Left ventricle myocardium superior (tissue), 1 donor: ENCODE measurements at regions of chr7 and their contacts with region 1.

Region 1: GRCh38 chr7:130010689-130011412 is 40.3 kb downstream of the ZC3HC1 start:
- DNase-seq: peak; percentile 77
- ATAC-seq: peak; percentile 68

Region 2: GRCh38 chr7:129664029-129665012 is 346.5 kb before region 1 on chr7:
- intact Hi-C with region 1: loop called (anchors 10 kb)
- DNase-seq: no peak
- ATAC-seq: peak; percentile 25

Region 3: DNA sequence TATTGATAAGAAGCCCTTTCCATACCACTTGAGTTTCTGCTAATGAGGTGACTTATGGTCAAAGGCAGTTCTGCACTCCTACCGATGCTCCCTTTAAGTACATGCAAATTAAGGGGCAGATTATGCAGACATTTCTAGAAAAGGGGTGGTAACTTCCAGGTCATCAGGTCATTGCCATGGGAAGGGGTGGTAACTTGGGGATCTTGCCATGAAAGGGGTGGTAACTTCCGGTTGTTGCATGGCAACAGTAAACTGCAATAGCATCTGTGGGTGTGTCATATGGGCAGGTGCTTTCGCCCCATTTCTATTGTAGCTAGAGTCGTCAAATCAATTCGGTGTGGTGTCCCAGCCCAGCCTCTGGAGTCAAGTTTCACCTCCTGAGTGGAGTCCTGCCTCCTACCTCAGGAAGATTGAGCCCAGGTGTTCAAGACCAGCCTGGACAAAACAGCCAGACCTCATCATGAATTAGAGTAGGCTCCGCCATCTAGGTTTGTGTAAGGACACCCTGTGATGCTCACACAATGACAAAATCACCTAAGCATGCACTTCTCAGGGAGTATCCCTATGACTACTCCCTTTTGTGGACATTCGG is 208.9 kb before region 1 on chr7:
- intact Hi-C with region 1: no loop called
- DNase-seq: no peak
- ATAC-seq: no peak

Region 4: GRCh38 chr7:129829750-129830631 is 180.9 kb before region 1 on chr7:
- intact Hi-C with region 1: loop called (anchors 5 kb)
- DNase-seq: peak; percentile 47
- ATAC-seq: peak; percentile 38